ENCODE measurements at regions of chr3 and their contacts with region 1.

Region 1: GRCh38 chr3:184513276-184514170 is 48.1 kb upstream of the EPHB3 start:
- DNase-seq: peak; percentile 67 to 89 (median 83)
- ATAC-seq: peak; percentile 99
- H3K4me3 ChIP-seq: peak overlapping the region; percentile 37 to 38
- H3K4me3 Mint-ChIP-seq: peak overlapping the region; percentile 52
- H3K27ac ChIP-seq: no peak overlapping the region
- H3K27ac Mint-ChIP-seq: no peak overlapping the region
- H3K4me1 ChIP-seq: peaks cover 11% of the 10 kb centered on the region
- H3K4me1 Mint-ChIP-seq: peaks cover 8% of the 10 kb centered on the region
- H3K27me3 ChIP-seq: peaks cover 8 to 15% of the 10 kb centered on the region in 2 experiments
- H3K27me3 Mint-ChIP-seq: peaks cover 57% of the 10 kb centered on the region
- CTCF ChIP-seq: peak; percentile 84

Region 2: GRCh38 chr3:184289426-184289938 is 224.0 kb before region 1 on chr3:
- CTCF ChIA-PET with region 1: interaction called, 3 read pairs
- POLR2A ChIA-PET with region 1: no interaction called
- intact Hi-C with region 1: loop called in 1 of 2 experiments (anchors 5 kb)
- DNase-seq: peak; percentile 21 to 73 (median 57)
- ATAC-seq: peak; percentile 67
- H3K4me3 ChIP-seq: no peak overlapping the region
- H3K4me3 Mint-ChIP-seq: no peak overlapping the region
- H3K27ac ChIP-seq: no peak overlapping the region
- H3K27ac Mint-ChIP-seq: no peak overlapping the region
- H3K4me1 ChIP-seq: no peaks in the 10 kb centered on the region
- H3K4me1 Mint-ChIP-seq: no peaks in the 10 kb centered on the region
- H3K27me3 ChIP-seq: no peaks in the 10 kb centered on the region
- H3K27me3 Mint-ChIP-seq: peaks cover 13% of the 10 kb centered on the region
- CTCF ChIP-seq: peak; percentile 40

Region 3: DNA sequence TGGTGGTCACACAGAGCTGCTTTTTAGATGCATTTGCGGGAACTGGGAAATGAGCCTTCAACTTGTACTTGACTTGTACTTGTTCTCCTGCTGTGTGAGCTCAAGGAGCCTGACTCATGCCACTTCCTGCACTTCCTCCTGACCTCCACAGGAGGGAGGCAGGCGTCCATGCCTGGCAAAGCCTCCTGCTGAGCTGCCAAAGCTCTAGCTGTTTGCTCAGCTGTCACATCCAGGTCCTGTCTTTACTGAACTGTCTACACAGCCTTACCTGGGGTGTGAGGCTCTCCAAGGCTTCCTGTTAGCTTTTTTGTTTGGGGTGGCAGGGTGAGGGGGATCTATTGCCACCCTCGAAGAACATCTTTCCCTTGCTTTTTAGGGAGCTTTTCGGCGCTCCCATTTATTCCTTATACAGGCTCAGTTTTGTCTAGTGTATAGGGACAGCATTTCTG is 141.9 kb before region 1 on chr3:
- CTCF ChIA-PET with region 1: interaction called, 37 read pairs
- POLR2A ChIA-PET with region 1: no interaction called
- intact Hi-C with region 1: loop called (anchors 1 to 2 kb)
- DNase-seq: peak; percentile 29 to 74 (median 54)
- ATAC-seq: peak; percentile 99
- H3K4me3 ChIP-seq: no peak overlapping the region
- H3K4me3 Mint-ChIP-seq: no peak overlapping the region
- H3K27ac ChIP-seq: no peak overlapping the region
- H3K27ac Mint-ChIP-seq: no peak overlapping the region
- H3K4me1 ChIP-seq: no peaks in the 10 kb centered on the region
- H3K4me1 Mint-ChIP-seq: peaks cover 4% of the 10 kb centered on the region
- H3K27me3 ChIP-seq: no peaks in the 10 kb centered on the region
- H3K27me3 Mint-ChIP-seq: peaks cover 2% of the 10 kb centered on the region
- CTCF ChIP-seq: peak; percentile 74

Region 4: GRCh38 chr3:184474897-184475296 is 38.6 kb before region 1 on chr3:
- CTCF ChIA-PET with region 1: interaction called, 12 read pairs
- POLR2A ChIA-PET with region 1: no interaction called
- intact Hi-C with region 1: no loop called
- DNase-seq: no peak
- ATAC-seq: no peak
- H3K4me3 ChIP-seq: no peak overlapping the region
- H3K4me3 Mint-ChIP-seq: no peak overlapping the region
- H3K27ac ChIP-seq: no peak overlapping the region
- H3K27ac Mint-ChIP-seq: no peak overlapping the region
- H3K4me1 ChIP-seq: no peaks in the 10 kb centered on the region
- H3K4me1 Mint-ChIP-seq: peaks cover 7% of the 10 kb centered on the region
- H3K27me3 ChIP-seq: peaks cover 0 to 8% of the 10 kb centered on the region in 2 experiments
- H3K27me3 Mint-ChIP-seq: peaks cover 18% of the 10 kb centered on the region
- CTCF ChIP-seq: no peak

Region 5: DNA sequence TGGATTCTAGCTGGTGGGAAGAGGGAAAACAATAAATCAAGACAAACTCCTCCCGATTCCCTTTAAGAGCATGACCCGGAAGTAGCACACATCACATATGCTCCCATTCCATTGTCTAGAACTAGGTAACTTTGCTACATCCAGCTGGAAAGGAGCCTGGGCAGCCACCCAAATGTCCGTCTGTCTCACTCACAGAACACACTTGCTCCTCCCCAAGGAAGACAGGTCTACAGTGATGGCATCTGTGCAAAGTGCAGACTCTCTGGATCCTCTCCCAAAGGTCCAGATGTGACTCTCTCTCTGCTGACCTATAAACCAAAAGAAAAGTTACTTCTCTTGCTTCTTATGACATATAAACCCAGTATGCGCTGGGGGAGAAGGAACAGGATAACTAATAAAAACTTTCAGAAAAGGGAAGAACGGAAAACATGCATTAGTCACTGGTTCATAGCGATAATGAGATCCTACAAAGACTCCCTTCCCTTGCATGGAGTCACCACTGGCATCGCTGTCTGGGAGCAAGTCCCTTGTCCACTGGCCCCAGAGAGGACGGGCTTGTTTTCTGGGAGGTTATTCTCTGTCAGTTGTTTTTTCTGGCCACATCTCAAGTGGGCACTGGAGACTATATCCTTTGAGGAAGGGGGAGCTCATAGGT is 18.2 kb after region 1 on chr3:
- CTCF ChIA-PET with region 1: interaction called, 50 read pairs
- POLR2A ChIA-PET with region 1: no interaction called
- intact Hi-C with region 1: no loop called
- DNase-seq: peak in 1 of 9 experiments; percentile 25
- ATAC-seq: no peak
- H3K4me3 ChIP-seq: no peak overlapping the region
- H3K4me3 Mint-ChIP-seq: no peak overlapping the region
- H3K27ac ChIP-seq: no peak overlapping the region
- H3K27ac Mint-ChIP-seq: no peak overlapping the region
- H3K4me1 ChIP-seq: no peaks in the 10 kb centered on the region
- H3K4me1 Mint-ChIP-seq: no peaks in the 10 kb centered on the region
- H3K27me3 ChIP-seq: peaks cover 0 to 4% of the 10 kb centered on the region in 2 experiments
- H3K27me3 Mint-ChIP-seq: peaks cover 31% of the 10 kb centered on the region
- CTCF ChIP-seq: no peak

Region 6: GRCh38 chr3:184727357-184728009 is 214.0 kb after region 1 on chr3:
- CTCF ChIA-PET with region 1: no interaction called
- POLR2A ChIA-PET with region 1: no interaction called
- intact Hi-C with region 1: no loop called
- DNase-seq: peak in 7 of 9 experiments; percentile 11 to 76 (median 52)
- ATAC-seq: peak; percentile 57
- H3K4me3 ChIP-seq: no peak overlapping the region
- H3K4me3 Mint-ChIP-seq: no peak overlapping the region
- H3K27ac ChIP-seq: no peak overlapping the region
- H3K27ac Mint-ChIP-seq: no peak overlapping the region
- H3K4me1 ChIP-seq: no peaks in the 10 kb centered on the region
- H3K4me1 Mint-ChIP-seq: no peaks in the 10 kb centered on the region
- H3K27me3 ChIP-seq: no peaks in the 10 kb centered on the region
- H3K27me3 Mint-ChIP-seq: peaks cover 14% of the 10 kb centered on the region
- CTCF ChIP-seq: peak; percentile 41